Heart right ventricle (tissue), 16 donors: ENCODE measurements at regions of chr11 and their contacts with region 1.

Region 1: GRCh38 chr11:125429166-125429707 is 66.8 kb downstream of the FEZ1 start:
- DNase-seq: peak; percentile 53 to 64
- ATAC-seq: peak in 1 of 8 donors; percentile 57
- H3K4me3 ChIP-seq: no peak overlapping the region
- H3K27ac ChIP-seq: no peak overlapping the region
- H3K4me1 ChIP-seq: peaks cover 0 to 44% (median 16%) of the 10 kb centered on the region in 9 donors
- H3K27me3 ChIP-seq: no peaks in the 10 kb centered on the region
- CTCF ChIP-seq: peak; percentile 39 to 74 (median 65)

Region 2: DNA sequence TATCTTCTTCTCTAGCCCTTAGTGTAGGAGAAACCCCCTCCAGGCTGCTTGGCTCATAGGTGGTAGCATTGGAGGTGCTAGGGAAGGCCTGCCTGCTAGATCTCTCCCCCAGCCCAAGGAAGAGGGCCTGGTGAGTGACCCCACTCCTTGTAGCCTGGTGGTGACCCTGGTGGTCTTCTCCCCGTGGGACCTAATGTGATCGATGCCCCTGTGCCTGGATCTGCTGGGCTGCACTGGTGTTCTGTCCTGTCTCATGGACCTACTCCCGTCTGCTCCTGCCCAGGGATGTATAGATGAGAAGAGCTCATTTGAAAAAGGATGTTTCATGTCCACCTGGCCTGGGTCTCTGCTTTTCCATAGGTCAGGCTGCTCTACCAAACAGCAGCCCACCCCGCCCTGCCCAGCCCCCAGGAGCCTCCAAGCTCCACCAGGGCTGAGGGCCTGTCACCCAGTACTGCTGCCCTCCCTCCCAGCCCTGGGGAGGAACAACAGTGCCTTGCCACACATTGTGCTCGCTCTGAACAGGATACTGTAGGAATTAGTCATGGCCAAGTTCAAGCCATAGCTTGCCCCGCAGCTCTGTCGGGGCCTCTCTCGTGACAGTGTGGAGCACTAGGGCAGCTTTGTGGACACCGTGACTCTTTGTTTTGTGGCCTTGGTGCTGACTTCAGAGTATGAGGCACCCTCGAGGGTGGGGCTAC is 346.5 kb before region 1 on chr11:
- intact Hi-C with region 1: loop called in 1 of 10 experiments (anchors 10 kb)
- DNase-seq: no peak
- ATAC-seq: no peak
- H3K4me3 ChIP-seq: no peak overlapping the region
- H3K27ac ChIP-seq: no peak overlapping the region
- H3K4me1 ChIP-seq: no peaks in the 10 kb centered on the region
- H3K27me3 ChIP-seq: peaks cover 0 to 32% (median 6%) of the 10 kb centered on the region in 7 donors
- CTCF ChIP-seq: no peak